Breast epithelium (tissue), 4 donors: ENCODE measurements at regions of chr21 and their contacts with region 1.

Region 1: DNA sequence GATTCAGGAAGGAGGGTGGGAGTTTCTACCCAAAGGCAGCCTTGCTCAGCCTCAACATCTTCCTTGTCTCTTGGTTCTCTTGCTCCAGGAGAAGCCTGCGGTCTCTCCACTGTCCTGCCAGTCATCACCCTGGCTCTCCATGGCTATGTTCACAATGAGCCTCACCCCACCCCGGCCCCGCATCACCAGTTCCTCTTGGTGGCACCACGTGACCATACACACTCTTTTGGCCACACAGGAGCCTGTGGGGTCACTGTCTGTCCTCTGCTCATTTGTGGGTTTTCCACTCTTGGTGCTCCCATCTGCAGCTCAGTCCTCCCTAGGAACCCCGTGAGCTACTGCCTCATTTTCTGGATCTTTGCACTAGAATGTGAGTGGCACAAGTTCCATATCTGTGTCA is 6.5 kb upstream of the FAM3B start:
- DNase-seq: no peak
- H3K4me3 ChIP-seq: no peak overlapping the region
- H3K27ac ChIP-seq: no peak overlapping the region
- H3K4me1 ChIP-seq: no peaks in the 10 kb centered on the region
- H3K27me3 ChIP-seq: no peaks in the 10 kb centered on the region
- CTCF ChIP-seq: no peak
- POLR2A ChIP-seq: no peak

Region 2: DNA sequence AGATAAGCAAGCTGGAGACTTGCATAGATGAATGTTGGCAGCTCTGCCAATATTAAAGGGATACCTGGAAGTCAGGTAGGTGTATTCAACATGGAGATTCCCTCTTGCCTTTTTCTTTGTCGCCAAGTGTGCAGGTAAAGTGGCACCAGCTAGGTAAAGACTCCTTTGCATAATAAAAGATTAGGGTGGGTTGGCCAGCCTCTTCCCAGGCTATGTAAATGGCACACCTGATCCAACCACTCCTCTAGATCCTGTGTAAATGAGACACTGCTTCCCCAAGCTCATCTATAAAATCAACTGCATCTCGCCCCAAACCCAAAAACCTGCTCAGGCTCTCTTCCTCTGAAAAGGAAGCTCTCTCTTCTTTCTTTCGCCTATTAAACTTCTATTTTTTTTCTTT is 362.4 kb before region 1 on chr21:
- intact Hi-C with region 1: loop called (anchors 5 kb)
- DNase-seq: no peak
- H3K4me3 ChIP-seq: no peak overlapping the region
- H3K27ac ChIP-seq: no peak overlapping the region
- H3K4me1 ChIP-seq: no peaks in the 10 kb centered on the region
- H3K27me3 ChIP-seq: no peaks in the 10 kb centered on the region
- CTCF ChIP-seq: no peak
- POLR2A ChIP-seq: no peak